ENCODE measurements at regions of chr5 and their contacts with region 1.

Region 1: GRCh38 chr5:136080483-136081216 is 51.9 kb downstream of the TGFBI start:
- DNase-seq: peak; percentile 94
- ATAC-seq: peak; percentile 95
- H3K4me3 ChIP-seq: peak overlapping the region; percentile 42
- H3K27ac ChIP-seq: peak overlapping the region; percentile 36
- H3K4me1 ChIP-seq: no peaks in the 10 kb centered on the region
- H3K27me3 ChIP-seq: peaks cover 3% of the 10 kb centered on the region; the same call in 1 of the 2 replicates
- CTCF ChIP-seq: no peak
- POLR2A ChIP-seq: peak; percentile 82
- RAD21 ChIP-seq: no peak

Region 2: GRCh38 chr5:135873831-135874230 is 206.8 kb before region 1 on chr5:
- CTCF ChIA-PET with region 1: no interaction called
- POLR2A ChIA-PET with region 1: no interaction called
- dilution Hi-C with region 1: no loop called
- in situ Hi-C with region 1: no loop called
- intact Hi-C with region 1: no loop called
- DNase-seq: no peak
- ATAC-seq: no peak
- H3K4me3 ChIP-seq: no peak overlapping the region
- H3K27ac ChIP-seq: no peak overlapping the region
- H3K4me1 ChIP-seq: no peaks in the 10 kb centered on the region
- H3K27me3 ChIP-seq: peaks cover 18% of the 10 kb centered on the region
- CTCF ChIP-seq: no peak
- POLR2A ChIP-seq: no peak
- RAD21 ChIP-seq: no peak

Region 3: GRCh38 chr5:135887351-135887864 is 193.2 kb before region 1 on chr5:
- CTCF ChIA-PET with region 1: interaction called, 18 read pairs
- POLR2A ChIA-PET with region 1: no interaction called
- dilution Hi-C with region 1: no loop called
- in situ Hi-C with region 1: loop called (anchors 5 kb)
- intact Hi-C with region 1: loop called (anchors 1 kb)
- DNase-seq: peak; percentile 69
- ATAC-seq: peak; percentile 93
- H3K4me3 ChIP-seq: no peak overlapping the region
- H3K27ac ChIP-seq: no peak overlapping the region
- H3K4me1 ChIP-seq: peaks cover 9% of the 10 kb centered on the region; the same call in 1 of the 2 replicates
- H3K27me3 ChIP-seq: peaks cover 20% of the 10 kb centered on the region
- CTCF ChIP-seq: peak; percentile 91
- POLR2A ChIP-seq: peak; percentile 39; the same call in 1 of the 2 replicates
- RAD21 ChIP-seq: peak; percentile 95

Region 4: GRCh38 chr5:136020383-136021015 is 60.2 kb before region 1 on chr5:
- CTCF ChIA-PET with region 1: no interaction called
- POLR2A ChIA-PET with region 1: no interaction called
- dilution Hi-C with region 1: no loop called
- in situ Hi-C with region 1: no loop called
- intact Hi-C with region 1: loop called (anchors 1 kb)
- DNase-seq: peak; percentile 99
- ATAC-seq: peak; percentile 66
- H3K4me3 ChIP-seq: no peak overlapping the region
- H3K27ac ChIP-seq: peak overlapping the region; percentile 97; the same call in 1 of the 2 replicates
- H3K4me1 ChIP-seq: peaks cover 51% of the 10 kb centered on the region
- H3K27me3 ChIP-seq: no peaks in the 10 kb centered on the region
- CTCF ChIP-seq: no peak
- POLR2A ChIP-seq: 0 out of 2 replicates have a peak, but pooled peaks have one; percentile 58
- RAD21 ChIP-seq: no peak

Region 5: DNA sequence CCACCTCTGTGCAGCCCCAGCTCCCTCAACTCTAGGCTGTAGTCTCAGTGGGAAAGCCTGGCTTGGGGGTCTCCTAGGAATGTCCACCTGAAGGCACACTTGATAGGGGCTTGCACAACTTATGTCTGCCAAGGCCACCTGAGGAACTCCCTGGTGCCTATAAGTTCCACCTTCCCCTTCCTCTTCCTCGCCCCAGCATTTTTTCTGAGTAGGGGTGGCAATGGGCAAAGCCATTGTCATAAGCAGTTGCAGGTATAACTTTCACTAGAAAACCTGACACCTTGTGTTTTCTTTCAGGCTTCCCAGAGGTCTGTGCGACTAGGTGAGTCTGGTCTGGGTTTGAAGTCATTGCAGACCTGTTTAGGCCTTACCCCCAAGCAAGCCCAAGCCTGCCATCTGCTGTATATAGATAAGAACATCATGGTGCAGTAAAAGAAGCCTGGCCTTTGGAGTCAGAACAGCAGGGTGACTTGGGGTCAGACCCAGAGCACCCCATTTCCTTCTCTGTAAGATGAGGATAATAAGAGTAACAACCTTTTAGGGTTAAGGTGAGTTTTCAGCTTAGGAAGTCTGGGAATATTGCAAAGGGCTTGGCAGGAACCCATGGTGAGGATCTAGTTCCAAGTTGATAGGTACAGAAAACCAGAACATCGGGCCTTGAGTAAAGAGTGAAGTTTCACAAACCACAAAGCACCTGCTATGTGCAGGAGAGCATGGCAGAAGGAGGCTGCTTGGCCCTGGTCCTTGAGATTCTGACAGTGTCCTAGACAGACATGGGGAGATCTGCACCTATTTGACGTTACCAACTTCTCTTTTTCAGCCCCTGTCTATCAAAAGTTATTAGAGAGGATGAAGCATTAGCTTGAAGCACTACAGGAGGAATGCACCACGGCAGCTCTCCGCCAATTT is 18.0 kb before region 1 on chr5:
- CTCF ChIA-PET with region 1: interaction called, 7 read pairs
- POLR2A ChIA-PET with region 1: no interaction called
- dilution Hi-C with region 1: no loop called
- in situ Hi-C with region 1: no loop called
- intact Hi-C with region 1: loop called (anchors 1 kb)
- DNase-seq: peak; percentile 45
- ATAC-seq: no peak
- H3K4me3 ChIP-seq: no peak overlapping the region
- H3K27ac ChIP-seq: peak overlapping the region; percentile 18; the same call in 1 of the 2 replicates
- H3K4me1 ChIP-seq: peaks cover 18% of the 10 kb centered on the region
- H3K27me3 ChIP-seq: no peaks in the 10 kb centered on the region
- CTCF ChIP-seq: peak; percentile 54
- POLR2A ChIP-seq: no peak
- RAD21 ChIP-seq: peak; percentile 74

Region 6: GRCh38 chr5:136174021-136174659 is 93.5 kb after region 1 on chr5:
- CTCF ChIA-PET with region 1: interaction called, 7 read pairs
- POLR2A ChIA-PET with region 1: no interaction called
- dilution Hi-C with region 1: no loop called
- in situ Hi-C with region 1: loop called (anchors 10 kb)
- intact Hi-C with region 1: loop called (anchors 1 kb)
- DNase-seq: peak; percentile 75
- ATAC-seq: peak; percentile 92
- H3K4me3 ChIP-seq: no peak overlapping the region
- H3K27ac ChIP-seq: no peak overlapping the region
- H3K4me1 ChIP-seq: no peaks in the 10 kb centered on the region
- H3K27me3 ChIP-seq: no peaks in the 10 kb centered on the region
- CTCF ChIP-seq: peak; percentile 72
- POLR2A ChIP-seq: no peak
- RAD21 ChIP-seq: peak; percentile 67

Region 7: GRCh38 chr5:136222583-136223274 is 142.1 kb after region 1 on chr5:
- CTCF ChIA-PET with region 1: no interaction called
- POLR2A ChIA-PET with region 1: no interaction called
- dilution Hi-C with region 1: no loop called
- in situ Hi-C with region 1: no loop called
- intact Hi-C with region 1: no loop called
- DNase-seq: no peak
- ATAC-seq: no peak
- H3K4me3 ChIP-seq: no peak overlapping the region
- H3K27ac ChIP-seq: no peak overlapping the region
- H3K4me1 ChIP-seq: no peaks in the 10 kb centered on the region
- H3K27me3 ChIP-seq: no peaks in the 10 kb centered on the region; the same call in none of the 2 replicates
- CTCF ChIP-seq: no peak
- POLR2A ChIP-seq: no peak
- RAD21 ChIP-seq: no peak

Measured in IMR-90 (cell line).